ENCODE measurements at regions of chr16 and their contacts with region 1.

Region 1: GRCh38 chr16:234468-235305 is at the start of gene FAM234A:
- DNase-seq: peak; percentile 98
- ATAC-seq: peak; percentile 86
- H3K4me3 ChIP-seq: peak within 1 kb of the TSS; percentile 74 to 89 (median 83)
- H3K4me3 Mint-ChIP-seq: peak within 1 kb of the TSS; percentile 88
- H3K27ac ChIP-seq: peak within 1 kb of the TSS; percentile 96 to 99
- H3K27ac Mint-ChIP-seq: peak within 1 kb of the TSS; percentile 99
- H3K4me1 ChIP-seq: peaks cover 3 to 25% of the 10 kb centered on the region in 2 donors
- H3K4me1 Mint-ChIP-seq: peaks cover 16% of the 10 kb centered on the region
- H3K27me3 ChIP-seq: no peaks in the 10 kb centered on the region
- H3K27me3 Mint-ChIP-seq: no peaks in the 10 kb centered on the region
- CTCF ChIP-seq: peak; percentile 64
- total RNA-seq, gene FAM234A: 42.9 and 44.5 TPM in 2 replicates

Region 2: DNA sequence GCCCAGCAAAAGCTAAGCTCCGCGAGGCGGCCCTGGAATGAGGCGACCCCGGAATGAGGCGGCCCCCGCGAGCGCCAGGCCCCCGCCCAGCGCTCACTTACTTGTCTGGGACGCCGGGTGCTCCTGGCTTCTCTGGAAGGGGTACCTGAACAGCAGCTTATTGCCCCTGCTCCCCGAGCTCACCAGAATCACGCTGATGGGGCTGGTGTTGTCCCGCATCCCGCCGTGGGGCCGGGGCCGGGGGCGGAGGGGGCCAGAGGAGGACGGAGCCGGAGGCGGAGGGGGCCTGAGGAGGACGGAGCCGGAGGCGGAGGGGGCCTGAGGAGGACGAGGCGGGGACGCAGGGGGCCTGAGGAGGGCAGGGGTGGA is 96.7 kb before region 1 on chr16:
- CTCF ChIA-PET with region 1: no interaction called
- POLR2A ChIA-PET with region 1: no interaction called
- intact Hi-C with region 1: loop called (anchors 2 kb)
- DNase-seq: peak; percentile 51
- ATAC-seq: peak; percentile 3
- H3K4me3 ChIP-seq: peak overlapping the region; percentile 38 to 79 (median 64)
- H3K4me3 Mint-ChIP-seq: peak overlapping the region; percentile 74
- H3K27ac ChIP-seq: peak overlapping the region in 1 of 2 donors; percentile 88
- H3K27ac Mint-ChIP-seq: peak overlapping the region; percentile 26
- H3K4me1 ChIP-seq: peaks cover 0 to 10% of the 10 kb centered on the region in 2 donors
- H3K4me1 Mint-ChIP-seq: peaks cover 15% of the 10 kb centered on the region
- H3K27me3 ChIP-seq: no peaks in the 10 kb centered on the region
- H3K27me3 Mint-ChIP-seq: no peaks in the 10 kb centered on the region
- CTCF ChIP-seq: no peak

Measured in B cell (primary cell).